ENCODE measurements at regions of chr1 and their contacts with region 1.

Region 1: DNA sequence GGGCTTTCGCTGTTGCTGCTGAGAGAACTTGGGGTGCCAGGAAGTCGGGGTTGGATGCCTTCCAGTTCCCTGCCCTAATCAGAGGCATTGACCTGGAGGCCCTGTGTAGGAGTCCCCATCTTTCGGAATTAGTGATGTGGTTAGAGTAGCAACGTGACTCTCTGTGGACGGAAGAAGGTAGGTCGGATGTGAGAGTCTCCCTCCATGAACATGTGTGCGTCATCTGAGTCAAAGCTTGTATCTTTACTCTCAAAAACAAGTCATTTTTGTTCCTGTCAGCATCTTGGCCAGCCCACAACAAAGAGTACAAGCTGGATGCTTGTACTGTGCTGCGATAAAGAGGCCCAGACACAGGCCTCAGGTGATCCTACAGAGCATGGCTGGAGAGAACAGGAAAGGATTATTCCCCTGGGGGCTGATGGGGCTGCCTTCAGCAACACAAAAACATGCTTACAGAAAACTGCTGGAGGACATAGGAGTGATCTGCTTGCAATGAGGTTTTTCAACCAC is 31.0 kb upstream of the IL10 start:
- DNase-seq: peak; percentile 91
- ATAC-seq: peak; percentile 92
- H3K4me3 Mint-ChIP-seq: peak overlapping the region; percentile 6
- H3K27ac Mint-ChIP-seq: peak overlapping the region; percentile 76
- H3K4me1 Mint-ChIP-seq: peaks cover 76% of the 10 kb centered on the region
- H3K27me3 Mint-ChIP-seq: no peaks in the 10 kb centered on the region
- CTCF ChIP-seq: no peak

Region 2: DNA sequence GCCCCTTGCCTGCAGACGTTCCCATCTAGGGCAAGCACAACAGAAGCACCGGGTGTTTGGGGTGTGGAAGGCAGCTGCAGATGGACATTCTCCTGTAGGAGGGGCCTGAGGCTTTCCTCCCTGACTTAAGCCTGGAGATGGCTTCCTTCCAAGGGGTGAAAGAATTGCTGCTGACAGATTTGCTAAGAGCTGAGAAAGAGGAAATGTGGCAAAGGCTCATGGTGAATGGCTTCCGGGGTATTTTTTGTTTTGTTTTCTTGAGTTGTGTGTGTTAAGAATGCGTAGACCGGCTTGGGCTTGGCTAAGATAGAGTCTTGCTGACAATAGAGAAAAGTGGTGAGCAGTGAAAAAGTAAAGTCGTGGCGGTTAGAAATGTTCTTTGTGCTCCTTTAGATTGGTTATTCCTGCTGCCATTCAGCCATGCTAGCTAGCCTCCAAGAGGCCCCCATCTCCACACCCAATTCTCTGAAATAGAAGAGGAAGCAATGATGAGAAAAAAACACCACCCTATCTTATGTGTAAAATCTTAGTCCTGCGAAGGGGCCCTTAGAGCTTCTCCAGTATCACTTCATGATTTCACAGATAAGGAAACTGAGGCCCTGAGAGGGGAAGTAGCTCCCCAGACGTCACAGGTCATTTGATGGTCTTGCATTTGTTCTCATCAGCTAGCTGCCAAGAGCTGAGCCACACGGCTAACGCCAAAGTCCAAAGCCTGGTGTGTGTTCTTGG is 227.9 kb before region 1 on chr1:
- CTCF ChIA-PET with region 1: no interaction called
- POLR2A ChIA-PET with region 1: no interaction called
- intact Hi-C with region 1: no loop called
- DNase-seq: peak; percentile 70
- ATAC-seq: peak; percentile 42
- H3K4me3 Mint-ChIP-seq: peak overlapping the region; percentile 70
- H3K27ac Mint-ChIP-seq: peak overlapping the region; percentile 100
- H3K4me1 Mint-ChIP-seq: peaks cover 93% of the 10 kb centered on the region
- H3K27me3 Mint-ChIP-seq: no peaks in the 10 kb centered on the region
- CTCF ChIP-seq: no peak

Region 3: DNA sequence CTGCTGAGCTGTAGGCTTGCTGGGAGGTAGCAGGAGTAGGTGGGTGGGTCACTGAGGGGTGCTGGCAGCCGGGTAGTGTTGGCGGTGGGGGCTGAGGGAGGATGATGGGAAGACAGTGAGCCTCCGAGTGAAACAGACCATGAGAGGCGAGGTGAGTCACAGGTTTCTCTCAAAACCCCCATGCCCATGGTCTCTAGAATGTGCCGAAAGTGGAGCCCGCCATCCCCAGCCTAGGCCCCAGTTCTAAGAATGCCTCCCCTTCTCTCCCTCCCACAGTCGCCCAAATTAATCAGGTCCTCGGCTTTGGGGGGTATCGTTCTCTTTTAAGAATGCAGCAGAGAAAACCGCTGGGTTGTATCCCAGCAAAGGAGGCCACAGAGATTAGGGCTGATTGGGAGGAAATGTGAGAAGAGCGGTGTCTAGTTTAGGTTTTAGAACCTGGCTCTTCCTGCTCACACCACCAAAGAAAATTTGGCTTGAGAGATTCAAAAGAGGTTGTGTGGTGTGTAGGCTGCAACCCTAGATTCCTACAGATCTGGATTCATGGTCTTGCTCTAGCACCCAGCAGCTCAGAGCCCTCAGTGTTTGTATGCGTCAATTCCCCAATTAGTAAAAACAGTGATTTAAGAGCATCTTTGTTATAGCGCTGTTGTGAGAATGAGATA is 60.4 kb before region 1 on chr1:
- CTCF ChIA-PET with region 1: interaction called, 628 read pairs
- POLR2A ChIA-PET with region 1: interaction called, 9 read pairs
- intact Hi-C with region 1: loop called (anchors 1 kb)
- DNase-seq: peak; percentile 78
- ATAC-seq: peak; percentile 50
- H3K4me3 Mint-ChIP-seq: no peak overlapping the region
- H3K27ac Mint-ChIP-seq: peak overlapping the region; percentile 52
- H3K4me1 Mint-ChIP-seq: peaks cover 69% of the 10 kb centered on the region
- H3K27me3 Mint-ChIP-seq: no peaks in the 10 kb centered on the region
- CTCF ChIP-seq: no peak

Region 4: DNA sequence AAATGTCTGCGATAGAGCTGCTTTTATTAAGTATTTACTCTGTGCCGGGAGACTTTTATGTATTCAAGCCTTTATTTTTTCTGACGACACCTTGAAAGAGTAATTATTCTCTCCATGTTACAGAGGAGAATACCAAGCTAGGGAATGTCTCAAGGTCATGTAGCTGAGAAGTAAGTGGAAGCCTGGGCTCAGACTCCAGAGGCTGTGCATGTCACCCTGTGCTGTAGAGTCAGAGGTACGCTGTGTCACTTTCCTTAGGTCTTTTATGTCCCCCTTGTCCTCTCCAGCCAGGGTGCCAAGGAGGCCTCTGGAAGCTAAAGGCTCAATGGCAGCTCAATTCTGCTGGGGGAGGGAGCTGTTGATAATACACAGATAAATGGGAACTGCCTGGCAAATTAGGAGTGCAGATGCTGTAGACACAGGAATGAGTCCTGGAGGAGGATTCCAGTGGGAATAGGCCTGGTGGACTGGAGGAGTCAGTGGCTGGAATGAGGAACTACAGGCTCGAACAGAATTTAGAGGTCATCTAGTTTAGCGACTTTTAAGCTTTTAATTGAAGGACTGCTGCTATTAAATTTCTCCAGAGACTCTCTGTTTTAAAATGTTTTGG is 42.0 kb before region 1 on chr1:
- CTCF ChIA-PET with region 1: interaction called, 125 read pairs
- POLR2A ChIA-PET with region 1: interaction called, 5 read pairs
- intact Hi-C with region 1: loop called (anchors 5 kb)
- DNase-seq: no peak
- ATAC-seq: no peak
- H3K4me3 Mint-ChIP-seq: no peak overlapping the region
- H3K27ac Mint-ChIP-seq: peak overlapping the region; percentile 19
- H3K4me1 Mint-ChIP-seq: peaks cover 28% of the 10 kb centered on the region
- H3K27me3 Mint-ChIP-seq: no peaks in the 10 kb centered on the region
- CTCF ChIP-seq: no peak